ENCODE measurements at regions of chr2 and their contacts with region 1.

Region 1: GRCh38 chr2:12675352-12675795 is 41.4 kb upstream of the TRIB2 start:
- DNase-seq: peak; percentile 41
- H3K4me3 Mint-ChIP-seq: peak overlapping the region; percentile 36
- H3K27ac Mint-ChIP-seq: peak overlapping the region; percentile 59
- H3K4me1 Mint-ChIP-seq: peaks cover 20% of the 10 kb centered on the region
- H3K27me3 Mint-ChIP-seq: no peaks in the 10 kb centered on the region
- CTCF ChIP-seq: no peak

Region 2: DNA sequence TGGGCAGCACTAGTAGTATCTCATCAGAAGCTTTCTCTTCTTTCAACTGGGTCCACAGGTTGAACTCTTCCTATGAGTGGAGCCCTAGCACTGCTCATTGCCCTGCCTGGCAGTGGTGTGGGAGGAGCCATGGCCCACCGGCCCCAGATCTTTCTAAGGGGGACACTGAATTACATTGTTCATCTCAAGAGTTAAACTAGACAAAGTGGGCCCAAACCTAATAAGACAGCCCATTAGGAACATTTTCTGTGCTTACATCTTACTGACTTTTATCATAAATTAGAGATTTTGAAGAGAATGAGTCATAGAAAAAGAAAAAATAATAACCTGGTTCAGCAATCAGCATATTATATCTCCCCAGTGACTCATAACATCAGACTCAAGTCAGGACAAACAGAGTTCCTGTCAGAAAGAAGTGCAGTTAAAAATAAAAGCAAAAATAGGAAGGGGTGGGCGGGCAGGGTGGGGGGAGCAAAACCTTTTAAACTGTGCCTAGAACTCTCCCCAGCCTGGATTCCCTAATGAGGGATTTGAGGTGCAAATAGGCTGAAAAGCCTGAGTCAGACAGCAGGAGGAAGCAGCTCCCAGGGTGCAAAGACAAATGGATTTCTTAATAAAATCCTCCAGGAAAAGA is 120.2 kb before region 1 on chr2:
- CTCF ChIA-PET with region 1: no interaction called
- intact Hi-C with region 1: no loop called
- DNase-seq: no peak
- H3K4me3 Mint-ChIP-seq: no peak overlapping the region
- H3K27ac Mint-ChIP-seq: no peak overlapping the region
- H3K4me1 Mint-ChIP-seq: peaks cover 23% of the 10 kb centered on the region
- H3K27me3 Mint-ChIP-seq: no peaks in the 10 kb centered on the region
- CTCF ChIP-seq: no peak

Region 3: GRCh38 chr2:12567411-12567810 is 108.0 kb before region 1 on chr2:
- CTCF ChIA-PET with region 1: no interaction called
- intact Hi-C with region 1: no loop called
- DNase-seq: no peak
- H3K4me3 Mint-ChIP-seq: no peak overlapping the region
- H3K27ac Mint-ChIP-seq: no peak overlapping the region
- H3K4me1 Mint-ChIP-seq: peaks cover 7% of the 10 kb centered on the region
- H3K27me3 Mint-ChIP-seq: no peaks in the 10 kb centered on the region
- CTCF ChIP-seq: no peak

Region 4: DNA sequence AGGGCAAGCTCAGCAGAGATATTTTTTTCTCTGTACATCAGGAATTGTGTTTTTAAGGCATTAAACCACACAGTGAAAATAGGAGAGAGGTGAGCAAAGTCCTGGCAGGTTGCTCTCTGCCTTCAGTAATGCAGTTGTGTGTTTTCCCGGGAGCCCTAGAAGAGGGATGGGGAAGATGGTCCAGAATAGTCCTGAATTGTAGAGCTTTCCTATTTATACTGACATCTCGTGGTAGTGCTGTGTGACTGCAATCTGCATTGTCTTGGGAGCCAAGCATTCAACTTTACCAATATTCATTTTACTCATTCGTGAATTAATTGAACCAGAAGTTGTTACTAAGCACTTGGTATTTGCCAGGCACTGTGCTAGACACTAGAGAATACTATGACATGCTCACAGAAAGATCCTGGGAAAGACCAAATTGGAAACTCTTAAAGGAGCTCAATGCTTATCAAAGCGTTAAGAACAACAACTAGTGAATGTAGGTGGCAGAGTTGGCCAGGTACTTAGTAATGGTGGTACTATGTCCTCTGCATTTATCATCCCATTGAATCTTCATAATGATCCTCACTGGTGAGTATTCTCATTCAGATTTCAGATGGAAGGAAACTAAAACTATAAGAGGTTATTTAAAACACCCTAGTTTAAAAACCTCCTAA is 255.9 kb after region 1 on chr2:
- CTCF ChIA-PET with region 1: interaction called, 3 read pairs
- intact Hi-C with region 1: loop called (anchors 5 kb)
- DNase-seq: peak; percentile 7
- H3K4me3 Mint-ChIP-seq: no peak overlapping the region
- H3K27ac Mint-ChIP-seq: no peak overlapping the region
- H3K4me1 Mint-ChIP-seq: no peaks in the 10 kb centered on the region
- H3K27me3 Mint-ChIP-seq: no peaks in the 10 kb centered on the region
- CTCF ChIP-seq: peak; percentile 44